HCT116 (cell line): ENCODE measurements at regions of chr6 and their contacts with region 1.

Region 1: DNA sequence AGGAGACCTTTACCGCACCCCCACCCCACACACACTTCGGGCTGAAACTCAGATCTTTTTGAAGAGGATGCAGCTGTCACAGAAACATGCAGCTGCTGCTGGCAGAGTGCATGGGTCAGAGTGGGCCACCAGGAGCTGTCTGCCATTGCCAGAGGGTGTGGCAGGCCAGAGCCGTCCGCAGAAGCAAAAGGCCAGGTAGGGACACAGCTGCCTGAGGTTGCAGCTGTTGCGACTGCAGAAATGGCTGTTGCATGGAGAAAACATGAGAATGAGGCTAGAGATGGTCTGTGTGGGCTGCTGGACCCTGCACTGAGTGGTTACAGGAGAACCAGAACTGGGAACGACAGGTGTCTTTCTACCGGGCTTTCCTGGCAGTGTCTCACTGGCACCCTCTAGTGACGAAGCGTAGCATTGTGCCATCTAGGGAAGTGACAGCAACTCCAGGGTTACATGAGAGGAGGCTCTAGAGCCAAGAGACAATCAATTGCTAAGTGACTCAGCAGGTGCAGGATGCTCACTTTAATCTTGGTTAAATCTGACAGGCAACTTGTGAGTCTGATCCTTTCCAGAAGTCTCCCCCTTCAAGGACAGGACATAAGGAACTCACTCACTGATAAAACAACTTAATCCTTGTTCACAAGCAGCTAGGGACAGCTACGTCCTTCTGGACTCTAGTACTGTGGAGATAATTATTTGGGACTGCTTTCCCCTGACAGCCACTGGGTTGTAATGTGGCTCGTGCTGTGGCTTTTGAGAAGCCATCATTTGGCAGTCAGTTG is 29.1 kb upstream of the SERPINB9 start:
- DNase-seq: peak; percentile 82
- ATAC-seq: peak; percentile 99
- H3K4me3 ChIP-seq: peak overlapping the region; percentile 19 to 38; a peak in 1 of 4 replicates
- H3K27ac ChIP-seq: no peak overlapping the region
- H3K4me1 ChIP-seq: peaks cover 0 to 10% of the 10 kb centered on the region in 2 experiments; a peak in 1 of 4 replicates
- H3K27me3 ChIP-seq: no peaks in the 10 kb centered on the region
- CTCF ChIP-seq: peak; percentile 92 to 99 (median 95)
- POLR2A ChIP-seq: no peak
- RAD21 ChIP-seq: peak; percentile 96

Region 2: DNA sequence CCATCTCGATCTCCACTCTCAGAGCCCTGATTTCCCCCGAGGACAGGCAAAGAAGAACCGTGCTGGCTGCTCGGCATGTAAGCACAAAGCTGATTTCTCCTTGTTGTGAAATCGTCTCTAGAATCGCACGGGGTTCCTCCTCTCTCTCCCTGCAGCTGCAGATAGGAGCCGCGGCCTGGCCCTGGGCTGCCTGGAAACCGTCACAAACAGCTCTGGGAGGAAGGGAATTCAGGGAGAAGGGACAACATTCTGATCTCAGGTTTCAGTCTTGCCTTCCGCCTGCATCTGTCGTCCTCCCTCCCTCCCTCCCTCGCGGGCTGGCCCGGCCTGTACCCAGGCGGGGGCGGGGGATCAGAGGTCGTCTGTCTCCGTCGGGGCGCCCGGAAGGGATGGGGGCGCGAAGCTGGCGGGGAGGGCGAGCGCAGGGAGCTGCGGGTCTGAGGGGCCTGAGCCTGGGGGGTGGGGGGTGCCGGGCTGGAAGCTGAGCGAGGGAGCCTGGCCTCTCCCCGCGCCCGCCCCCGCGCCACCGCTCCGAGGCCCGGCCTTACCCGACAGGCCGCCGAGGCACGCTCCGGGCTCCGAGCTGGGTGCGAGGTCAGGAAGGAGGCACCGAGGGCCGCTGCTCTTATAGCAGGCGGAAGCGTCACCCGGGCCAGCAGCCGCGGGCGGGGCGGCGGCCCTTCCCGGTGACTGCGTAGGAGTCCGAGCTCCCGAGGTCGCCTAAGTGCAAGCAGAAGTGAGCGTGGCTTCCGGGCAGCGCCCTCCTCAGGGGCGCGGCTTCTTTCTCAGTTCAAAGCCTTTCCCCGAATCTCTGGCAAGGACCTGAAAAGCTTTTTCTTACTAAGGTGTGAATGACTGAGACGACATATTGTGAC is 90.7 kb before region 1 on chr6 and contains the start of gene SERPINB1:
- CTCF ChIA-PET with region 1: interaction called, 47 read pairs
- POLR2A ChIA-PET with region 1: interaction called, 10 read pairs
- RAD21 ChIA-PET with region 1: interaction called, 6 to 14 read pairs
- intact Hi-C with region 1: loop called (anchors 1 kb)
- DNase-seq: peak; percentile 81
- ATAC-seq: peak; percentile 78
- H3K4me3 ChIP-seq: peak within 1 kb of the TSS; percentile 70 to 71
- H3K27ac ChIP-seq: peak within 1 kb of the TSS; percentile 64
- H3K4me1 ChIP-seq: peaks cover 54 to 77% of the 10 kb centered on the region in 2 experiments
- H3K27me3 ChIP-seq: no peaks in the 10 kb centered on the region
- CTCF ChIP-seq: no peak
- POLR2A ChIP-seq: peak; percentile 42
- RAD21 ChIP-seq: no peak
- total RNA-seq, gene SERPINB1: 73.2 TPM

Region 3: GRCh38 chr6:2848851-2849250 is 83.3 kb before region 1 on chr6:
- CTCF ChIA-PET with region 1: interaction called, 47 read pairs
- POLR2A ChIA-PET with region 1: interaction called, 7 read pairs
- RAD21 ChIA-PET with region 1: interaction called, 6 to 14 read pairs
- intact Hi-C with region 1: loop called (anchors 1 kb)
- DNase-seq: no peak
- ATAC-seq: peak; percentile 43
- H3K4me3 ChIP-seq: no peak overlapping the region
- H3K27ac ChIP-seq: no peak overlapping the region; the same call in 1 of the 2 replicates
- H3K4me1 ChIP-seq: peaks cover 26 to 76% of the 10 kb centered on the region in 2 experiments
- H3K27me3 ChIP-seq: no peaks in the 10 kb centered on the region
- CTCF ChIP-seq: no peak
- POLR2A ChIP-seq: no peak
- RAD21 ChIP-seq: no peak

Region 4: GRCh38 chr6:2853761-2854395 is 78.3 kb before region 1 on chr6:
- CTCF ChIA-PET with region 1: interaction called, 11 read pairs
- POLR2A ChIA-PET with region 1: interaction called, 4 read pairs
- RAD21 ChIA-PET with region 1: interaction called in 1 of 2 experiments, 3 read pairs
- intact Hi-C with region 1: no loop called
- DNase-seq: peak; percentile 87
- ATAC-seq: peak; percentile 47
- H3K4me3 ChIP-seq: peak overlapping the region; percentile 23 to 53
- H3K27ac ChIP-seq: peak overlapping the region; percentile 76
- H3K4me1 ChIP-seq: peaks cover 44 to 88% of the 10 kb centered on the region in 2 experiments
- H3K27me3 ChIP-seq: no peaks in the 10 kb centered on the region
- CTCF ChIP-seq: peak in 2 of 3 experiments; percentile 26 to 40; a peak in 2 of 6 replicates
- POLR2A ChIP-seq: no peak
- RAD21 ChIP-seq: no peak

Region 5: DNA sequence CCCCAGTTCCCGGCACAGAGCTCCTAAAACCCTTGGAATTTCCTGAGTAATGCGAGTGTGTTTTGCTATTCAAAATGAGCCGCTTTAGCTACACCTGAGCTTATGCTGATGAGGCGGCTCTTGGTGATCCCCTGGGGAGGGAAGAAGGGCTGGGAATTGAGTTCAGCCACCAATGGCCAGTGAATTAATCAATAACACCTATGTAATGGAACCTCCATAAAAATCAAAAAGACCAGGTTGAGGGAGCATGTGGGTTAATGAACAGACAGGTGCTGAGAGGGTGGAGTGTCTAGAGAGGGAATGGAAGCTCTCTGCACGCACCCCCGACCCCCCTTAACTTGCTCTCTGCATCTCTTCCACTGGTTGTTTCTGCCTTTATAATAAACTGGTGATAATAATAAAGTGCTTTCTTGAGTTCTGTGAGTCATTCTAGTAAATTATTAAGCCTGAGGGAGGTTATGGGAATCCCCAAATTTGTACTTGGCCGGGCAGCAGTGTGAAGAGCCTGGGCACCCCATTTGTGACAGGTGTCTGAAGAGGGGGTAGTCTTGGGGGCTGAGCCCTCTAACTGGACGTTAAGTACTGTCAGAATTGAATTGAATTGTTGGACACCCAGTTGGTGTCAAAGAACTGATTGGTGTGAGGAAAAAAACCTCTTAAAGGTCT is 65.8 kb before region 1 on chr6:
- CTCF ChIA-PET with region 1: no interaction called
- POLR2A ChIA-PET with region 1: interaction called, 10 read pairs
- RAD21 ChIA-PET with region 1: no interaction called
- intact Hi-C with region 1: no loop called
- DNase-seq: no peak
- ATAC-seq: peak; percentile 43
- H3K4me3 ChIP-seq: 0 out of 4 replicates have a peak overlapping the region, but pooled peaks of 1 of the 2 experiments have one; percentile 4
- H3K27ac ChIP-seq: no peak overlapping the region
- H3K4me1 ChIP-seq: peaks cover 13 to 34% of the 10 kb centered on the region in 2 experiments
- H3K27me3 ChIP-seq: no peaks in the 10 kb centered on the region
- CTCF ChIP-seq: no peak
- POLR2A ChIP-seq: no peak
- RAD21 ChIP-seq: no peak

Region 6: DNA sequence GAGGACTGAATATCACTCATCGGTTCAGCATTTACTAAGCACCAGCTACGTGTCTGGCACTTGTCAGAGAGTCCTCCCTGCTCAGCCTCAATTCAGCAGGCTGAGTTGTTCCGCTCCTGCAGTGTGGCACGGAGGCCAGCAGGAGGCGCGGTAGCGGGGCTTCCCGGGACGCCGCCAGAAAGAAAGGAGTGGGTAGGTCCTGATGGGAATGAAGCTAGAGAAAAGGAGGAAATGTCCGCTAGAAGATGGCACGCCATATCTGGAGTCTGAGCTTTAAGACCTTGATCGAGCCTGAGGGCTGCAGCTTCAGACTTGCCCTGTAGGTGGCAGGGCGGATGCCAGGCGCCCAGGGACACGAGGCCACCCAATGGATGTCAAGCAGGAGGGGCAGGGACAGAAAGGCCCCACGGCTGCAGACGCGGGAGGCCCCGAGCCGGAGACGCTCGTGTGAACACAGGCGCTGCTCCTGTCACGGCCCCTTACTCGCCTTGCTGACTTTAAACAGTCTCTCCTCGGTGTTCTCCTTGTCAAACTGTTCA is 20.5 kb after region 1 on chr6:
- CTCF ChIA-PET with region 1: interaction called, 27 read pairs
- POLR2A ChIA-PET with region 1: no interaction called
- RAD21 ChIA-PET with region 1: no interaction called
- intact Hi-C with region 1: no loop called
- DNase-seq: peak; percentile 91
- ATAC-seq: peak; percentile 96
- H3K4me3 ChIP-seq: no peak overlapping the region
- H3K27ac ChIP-seq: peak overlapping the region; percentile 12; the same call in 1 of the 2 replicates
- H3K4me1 ChIP-seq: peaks cover 10 to 18% of the 10 kb centered on the region in 2 experiments
- H3K27me3 ChIP-seq: no peaks in the 10 kb centered on the region
- CTCF ChIP-seq: peak; percentile 99 to 100 (median 99)
- POLR2A ChIP-seq: no peak
- RAD21 ChIP-seq: peak; percentile 83

Region 7: GRCh38 chr6:2988426-2989331 is 56.5 kb after region 1 on chr6:
- CTCF ChIA-PET with region 1: interaction called, 3 read pairs
- POLR2A ChIA-PET with region 1: interaction called, 8 read pairs
- RAD21 ChIA-PET with region 1: interaction called in 1 of 2 experiments, 4 read pairs
- intact Hi-C with region 1: loop called (anchors 2 kb)
- DNase-seq: peak; percentile 95
- ATAC-seq: peak; percentile 82
- H3K4me3 ChIP-seq: peak overlapping the region; percentile 57 to 62
- H3K27ac ChIP-seq: peak overlapping the region; percentile 92
- H3K4me1 ChIP-seq: peaks cover 34 to 54% of the 10 kb centered on the region in 2 experiments
- H3K27me3 ChIP-seq: no peaks in the 10 kb centered on the region
- CTCF ChIP-seq: peak in 2 of 3 experiments; percentile 64 to 81; a peak in 4 of 6 replicates
- POLR2A ChIP-seq: peak; percentile 62
- RAD21 ChIP-seq: no peak

Region 8: DNA sequence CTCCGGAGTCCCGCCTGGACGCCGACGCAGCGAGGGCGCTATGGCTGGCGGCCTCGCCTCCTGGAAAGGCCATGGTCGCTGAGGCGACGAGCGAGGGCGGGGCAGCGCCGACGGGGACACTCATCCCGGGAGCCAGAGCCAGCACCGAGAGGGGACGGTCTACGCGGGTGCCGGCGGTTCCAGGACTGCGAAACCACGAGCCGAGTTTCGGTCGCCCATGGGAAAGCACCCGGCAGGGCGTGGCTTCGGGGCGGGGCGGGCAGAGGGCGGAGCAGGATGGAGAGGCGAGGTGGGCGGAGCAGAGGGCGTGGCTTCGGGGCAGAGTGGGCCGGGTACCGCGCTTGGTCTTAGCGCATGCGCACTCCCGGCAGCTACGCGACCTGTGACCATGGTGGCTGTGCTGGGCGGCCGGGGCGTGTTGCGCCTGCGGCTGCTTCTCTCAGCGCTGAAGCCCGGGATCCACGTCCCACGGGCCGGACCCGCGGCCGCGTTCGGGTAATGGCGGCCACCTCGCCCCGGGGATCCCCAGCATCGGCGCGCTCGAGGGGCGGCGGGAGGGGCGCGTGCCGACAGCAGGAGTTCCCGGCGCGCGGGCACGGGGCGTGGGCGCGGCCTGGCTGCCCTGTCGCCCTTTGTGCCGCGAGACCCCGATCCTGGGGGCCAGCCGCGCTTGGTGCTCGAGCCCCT is 186.3 kb after region 1 on chr6 and contains the start of gene BPHL:
- CTCF ChIA-PET with region 1: no interaction called
- POLR2A ChIA-PET with region 1: no interaction called
- RAD21 ChIA-PET with region 1: no interaction called
- intact Hi-C with region 1: no loop called
- DNase-seq: peak; percentile 84
- ATAC-seq: peak; percentile 94
- H3K4me3 ChIP-seq: peak within 1 kb of the TSS; percentile 80 to 99
- H3K27ac ChIP-seq: peak within 1 kb of the TSS; percentile 86
- H3K4me1 ChIP-seq: peaks cover 14 to 23% of the 10 kb centered on the region in 2 experiments
- H3K27me3 ChIP-seq: no peaks in the 10 kb centered on the region
- CTCF ChIP-seq: no peak
- POLR2A ChIP-seq: peak; percentile 72
- RAD21 ChIP-seq: no peak
- total RNA-seq, gene BPHL: 31.3 TPM